ENCODE measurements at regions of chr12 and their contacts with region 1.

Region 1: DNA sequence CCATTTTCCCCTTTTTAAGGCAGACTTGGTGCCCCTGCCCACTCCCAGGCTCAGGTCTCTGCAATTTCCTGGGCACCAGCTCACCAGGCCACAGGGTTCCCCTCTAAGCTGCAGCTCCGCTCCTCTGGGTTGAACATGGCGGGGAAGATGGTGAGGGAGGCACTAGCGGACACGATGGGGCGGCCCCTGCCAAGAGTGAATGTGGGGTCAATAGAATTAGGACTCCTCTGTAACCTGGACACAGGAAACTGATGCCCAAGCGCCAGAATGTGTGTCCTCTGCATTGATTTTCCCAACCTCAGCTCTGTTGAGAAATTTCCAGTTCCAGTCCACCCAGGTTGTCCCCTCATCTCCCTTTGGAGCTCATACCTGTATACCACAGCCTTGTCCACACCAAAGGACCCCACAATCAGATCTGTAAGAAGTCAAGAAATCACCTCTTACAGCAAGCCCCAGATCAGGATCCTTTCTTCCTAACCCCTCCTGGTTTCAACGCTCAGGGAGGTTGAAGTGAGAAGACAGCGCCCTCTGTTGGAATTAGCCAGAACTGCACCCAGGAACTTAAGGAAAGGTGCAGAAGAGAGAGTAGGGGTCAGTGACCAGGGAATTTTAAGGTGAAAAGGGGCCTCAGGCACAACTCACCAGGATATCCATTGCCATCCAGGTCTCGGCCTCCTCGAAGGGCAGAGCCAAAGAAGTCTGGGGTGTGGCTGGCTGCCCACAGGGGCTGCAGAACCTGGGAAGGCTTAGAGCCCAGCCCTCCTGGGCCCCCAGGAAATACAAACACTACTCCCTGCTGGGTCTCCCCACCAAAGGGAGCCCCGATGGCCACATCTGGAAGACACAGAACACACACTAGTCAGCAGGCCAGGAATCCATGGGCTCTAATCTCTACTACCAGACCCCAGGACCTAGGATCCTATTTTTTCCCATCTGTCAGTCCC is 14.7 kb downstream of the ITGA5 start:
- DNase-seq: peak in 3 of 5 donors; percentile 12 to 53 (median 51)
- ATAC-seq: peak in 1 of 4 donors; percentile 17
- H3K4me3 ChIP-seq: no peak overlapping the region
- H3K27ac ChIP-seq: peak overlapping the region in 7 of 12 donors; percentile 4 to 97 (median 33)
- H3K4me1 ChIP-seq: peaks cover 0 to 41% (median 22%) of the 10 kb centered on the region in 12 donors
- H3K27me3 ChIP-seq: no peaks in the 10 kb centered on the region
- CTCF ChIP-seq: peak; percentile 83 to 97 (median 94)
- POLR2A ChIP-seq: no peak

Region 2: DNA sequence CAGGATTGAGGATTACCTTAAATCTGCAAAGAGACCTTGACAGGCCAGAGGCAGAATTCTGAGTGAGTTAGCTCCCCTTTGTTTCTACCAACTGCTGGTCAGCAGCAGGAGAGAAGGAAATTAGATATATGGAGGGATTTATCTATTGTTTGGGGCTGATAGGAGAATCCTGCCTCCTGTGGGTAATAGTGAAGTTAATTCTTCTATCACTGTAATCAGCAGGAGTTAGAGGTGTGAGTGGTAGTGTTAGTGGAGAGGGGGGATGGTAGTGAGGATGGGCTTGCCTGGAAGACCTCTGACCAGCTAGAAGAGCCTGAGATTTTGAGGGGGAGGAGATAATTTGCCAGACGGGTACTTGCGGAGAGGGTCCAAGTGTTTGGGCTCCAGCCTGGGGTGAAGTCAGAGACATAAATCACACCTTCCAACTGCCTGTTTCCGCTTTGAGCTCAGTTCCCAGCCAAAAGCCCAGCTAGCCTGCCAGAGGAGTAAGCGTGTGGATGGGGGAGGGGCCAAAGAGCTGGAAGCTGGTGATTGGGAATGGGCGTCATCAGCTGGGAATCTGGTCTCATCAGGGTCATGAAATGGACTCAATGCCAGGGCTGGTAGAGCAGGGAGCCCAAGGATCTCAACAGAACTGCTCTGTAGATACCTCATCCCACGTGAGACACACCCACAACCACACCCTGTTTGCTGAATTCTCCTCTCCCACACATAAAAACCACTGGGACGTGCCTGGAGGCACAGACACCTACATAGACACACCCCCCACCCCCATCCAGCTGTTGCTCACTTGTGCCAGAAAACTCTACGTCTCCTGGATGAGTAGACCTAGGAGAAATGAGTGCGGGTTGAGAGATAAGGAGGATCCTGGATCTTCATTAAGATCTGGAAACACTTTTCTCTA is 27.8 kb after region 1 on chr12:
- intact Hi-C with region 1: loop called in 1 of 10 experiments (anchors 2 kb)
- DNase-seq: peak; percentile 78 to 90 (median 85)
- ATAC-seq: peak; percentile 64 to 86 (median 81)
- H3K4me3 ChIP-seq: peak overlapping the region in 2 of 12 donors; percentile 3 to 21
- H3K27ac ChIP-seq: peak overlapping the region; percentile 7 to 97 (median 74)
- H3K4me1 ChIP-seq: peaks cover 23 to 63% (median 46%) of the 10 kb centered on the region in 12 donors
- H3K27me3 ChIP-seq: no peaks in the 10 kb centered on the region
- CTCF ChIP-seq: peak in 1 of 12 donors; percentile 2
- POLR2A ChIP-seq: no peak